Activated T-helper 2 cell treated with anti-CD3 and anti-CD28 coated beads, Interferon-gamma antibody, Interleukin-2, Interleukin-4, amounts not matched to agents 10 μg/mL and 5 μg/mL and 100 μg/mL, durations not matched to agents 14 hours and 24 hours and 36 hours (primary cell): ENCODE measurements at regions of chr3 and their contacts with region 1.

Region 1: DNA sequence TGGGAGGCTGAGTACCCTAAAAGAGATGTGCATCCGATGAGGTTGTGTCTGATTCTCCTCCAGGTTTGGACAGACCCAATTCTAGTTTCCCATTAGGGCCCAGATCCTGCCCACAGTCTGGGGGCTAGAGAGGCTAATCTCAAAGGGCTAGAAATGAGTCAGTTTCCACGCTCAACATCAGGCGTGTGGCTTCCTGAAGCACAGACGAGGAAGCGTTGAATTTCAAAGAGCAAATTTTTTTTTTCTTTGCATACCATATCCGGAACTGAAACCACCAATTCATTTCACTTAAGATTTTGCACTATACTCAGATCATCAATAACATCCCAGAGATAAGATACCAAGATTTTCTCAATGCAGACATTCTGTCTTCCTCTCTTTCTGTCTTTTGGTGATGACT is 173.8 kb upstream of the BCL6 start:
- DNase-seq: peak; percentile 71
- H3K4me3 Mint-ChIP-seq: peak overlapping the region; percentile 63
- H3K27ac Mint-ChIP-seq: peak overlapping the region; percentile 90
- H3K4me1 Mint-ChIP-seq: peaks cover 72% of the 10 kb centered on the region
- H3K27me3 Mint-ChIP-seq: peaks cover 3% of the 10 kb centered on the region

Region 2: GRCh38 chr3:187963677-187964385 is 44.8 kb after region 1 on chr3:
- intact Hi-C with region 1: loop called (anchors 2 kb)
- DNase-seq: no peak
- H3K4me3 Mint-ChIP-seq: no peak overlapping the region
- H3K27ac Mint-ChIP-seq: peak overlapping the region; percentile 9
- H3K4me1 Mint-ChIP-seq: peaks cover 25% of the 10 kb centered on the region
- H3K27me3 Mint-ChIP-seq: peaks cover 4% of the 10 kb centered on the region

Region 3: GRCh38 chr3:188154014-188154808 is 235.2 kb after region 1 on chr3 and contains the start of gene LPP:
- intact Hi-C with region 1: loop called (anchors 2 kb)
- DNase-seq: peak; percentile 87
- H3K4me3 Mint-ChIP-seq: peak within 1 kb of the TSS; percentile 91
- H3K27ac Mint-ChIP-seq: peak within 1 kb of the TSS; percentile 93
- H3K4me1 Mint-ChIP-seq: peaks cover 63% of the 10 kb centered on the region
- H3K27me3 Mint-ChIP-seq: no peaks in the 10 kb centered on the region
- total RNA-seq, gene LPP: 54.5 and 59.0 TPM in 2 replicates

Region 4: DNA sequence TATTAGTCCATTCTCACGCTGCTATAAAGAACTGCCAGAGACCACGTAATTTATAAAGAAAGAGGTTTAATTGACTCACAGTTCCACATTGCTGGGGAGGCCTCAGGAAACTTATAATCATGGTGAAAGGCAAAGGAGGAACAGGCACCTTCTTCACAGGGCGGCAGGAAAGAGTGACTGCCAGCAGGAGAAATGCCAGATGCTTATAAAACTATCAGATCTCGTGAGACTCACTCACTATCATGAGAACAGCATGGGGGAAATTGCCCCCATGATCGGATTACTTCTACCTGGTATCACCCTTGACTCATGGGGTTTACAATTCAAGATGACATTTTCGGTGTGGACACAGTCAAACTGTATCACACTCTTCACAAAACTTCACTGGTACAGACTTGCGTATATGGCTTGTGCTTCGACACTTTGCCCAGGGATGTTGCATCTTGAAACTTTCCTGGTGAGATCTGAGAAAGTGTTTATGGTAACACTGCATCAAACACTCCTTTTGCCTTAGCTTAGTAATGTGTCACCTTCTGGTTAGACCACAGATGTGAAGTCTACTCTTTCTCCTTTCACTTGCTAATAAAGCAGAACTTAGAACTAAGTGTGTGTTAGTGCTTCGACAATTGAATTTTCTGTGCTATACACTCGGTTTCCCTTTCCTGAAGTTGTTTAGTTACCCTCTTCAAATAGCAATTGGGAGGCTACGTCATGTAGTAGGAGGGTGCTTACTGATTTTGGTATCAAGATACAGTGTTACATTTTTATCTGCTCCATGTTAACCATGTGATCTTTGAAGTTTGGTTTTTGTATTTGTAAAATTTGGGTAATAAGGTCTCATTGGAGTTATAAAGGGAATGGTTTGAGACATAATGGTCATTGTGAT is 420.6 kb after region 1 on chr3:
- intact Hi-C with region 1: loop called (anchors 5 kb)
- DNase-seq: peak; percentile 19
- H3K4me3 Mint-ChIP-seq: peak overlapping the region; percentile 66
- H3K27ac Mint-ChIP-seq: peak overlapping the region; percentile 89
- H3K4me1 Mint-ChIP-seq: peaks cover 29% of the 10 kb centered on the region
- H3K27me3 Mint-ChIP-seq: no peaks in the 10 kb centered on the region

Region 5: GRCh38 chr3:188752850-188753249 is 833.8 kb after region 1 on chr3:
- intact Hi-C with region 1: loop called (anchors 1 kb)
- DNase-seq: no peak
- H3K4me3 Mint-ChIP-seq: no peak overlapping the region
- H3K27ac Mint-ChIP-seq: no peak overlapping the region
- H3K4me1 Mint-ChIP-seq: peaks cover 19% of the 10 kb centered on the region
- H3K27me3 Mint-ChIP-seq: peaks cover 3% of the 10 kb centered on the region

Region 6: DNA sequence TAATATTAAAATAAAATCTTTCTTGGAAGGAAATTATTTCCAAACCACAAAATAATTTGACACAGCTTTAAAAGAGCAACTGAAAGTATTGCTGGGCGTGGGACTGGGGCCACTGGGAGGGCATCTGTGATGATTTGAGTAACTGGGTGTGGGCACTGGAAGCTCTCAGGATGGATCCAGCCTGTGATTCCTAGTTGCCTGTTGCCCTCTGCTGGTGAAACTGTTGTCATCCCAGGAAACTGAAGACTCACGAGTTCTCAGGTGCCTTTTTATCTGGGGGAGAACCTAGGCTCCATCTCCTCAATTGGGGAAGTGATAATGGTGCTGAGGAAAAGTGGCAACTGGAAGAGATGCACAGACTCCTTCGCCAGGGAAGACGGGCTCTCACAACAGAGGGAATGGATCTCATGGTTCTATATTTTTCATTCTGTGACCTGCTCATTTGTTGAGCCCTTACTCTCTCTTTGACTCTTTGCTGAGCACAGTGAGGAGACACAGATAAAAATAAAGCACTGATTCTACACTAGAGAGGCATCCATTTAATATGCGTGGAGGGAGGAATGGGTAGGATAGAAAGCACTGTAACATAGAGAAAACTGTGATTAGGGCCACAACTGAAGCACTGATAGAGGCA is 1314.3 kb after region 1 on chr3:
- intact Hi-C with region 1: loop called (anchors 2 kb)
- DNase-seq: no peak
- H3K4me3 Mint-ChIP-seq: no peak overlapping the region
- H3K27ac Mint-ChIP-seq: no peak overlapping the region
- H3K4me1 Mint-ChIP-seq: peaks cover 48% of the 10 kb centered on the region
- H3K27me3 Mint-ChIP-seq: peaks cover 18% of the 10 kb centered on the region